ENCODE measurements at regions of chr6 and their contacts with region 1.

Region 1: DNA sequence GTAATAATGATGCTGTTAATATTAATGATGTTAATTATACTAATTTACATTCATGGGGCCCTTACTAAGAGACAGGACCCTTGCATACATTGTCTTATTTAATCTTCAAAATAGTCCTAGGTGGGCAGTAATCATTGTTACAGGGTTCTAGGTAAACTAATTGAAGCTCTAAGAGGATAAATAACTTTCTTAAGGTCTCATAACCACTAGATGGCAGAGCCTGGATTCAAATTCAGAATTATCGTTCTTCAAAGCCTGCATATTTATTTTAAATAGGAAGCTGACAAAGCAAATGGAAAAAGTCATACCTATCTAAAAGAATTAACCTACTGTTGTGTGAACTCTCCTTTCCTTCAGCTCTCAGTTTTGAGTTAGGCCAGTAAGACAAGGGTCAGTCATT is 23.5 kb downstream of the PTCHD4 start:
- DNase-seq: peak; percentile 68
- ATAC-seq: peak; percentile 48; the same call in 1 of the 2 replicates
- H3K4me3 ChIP-seq: no peak overlapping the region
- H3K27ac ChIP-seq: no peak overlapping the region
- H3K4me1 ChIP-seq: no peaks in the 10 kb centered on the region
- H3K27me3 ChIP-seq: no peaks in the 10 kb centered on the region
- CTCF ChIP-seq: peak; percentile 66

Region 2: GRCh38 chr6:47787620-47788497 is 299.6 kb before region 1 on chr6:
- CTCF ChIA-PET with region 1: no interaction called
- POLR2A ChIA-PET with region 1: no interaction called
- intact Hi-C with region 1: loop called (anchors 2 kb)
- DNase-seq: peak; percentile 88
- ATAC-seq: peak; percentile 95
- H3K4me3 ChIP-seq: peak overlapping the region; percentile 27
- H3K27ac ChIP-seq: no peak overlapping the region
- H3K4me1 ChIP-seq: peaks cover 16% of the 10 kb centered on the region
- H3K27me3 ChIP-seq: no peaks in the 10 kb centered on the region
- CTCF ChIP-seq: peak; percentile 96

Region 3: GRCh38 chr6:48449002-48449401 is 361.6 kb after region 1 on chr6:
- CTCF ChIA-PET with region 1: no interaction called
- POLR2A ChIA-PET with region 1: no interaction called
- intact Hi-C with region 1: loop called (anchors 1 kb)
- DNase-seq: peak; percentile 19
- ATAC-seq: no peak
- H3K4me3 ChIP-seq: no peak overlapping the region
- H3K27ac ChIP-seq: no peak overlapping the region
- H3K4me1 ChIP-seq: no peaks in the 10 kb centered on the region
- H3K27me3 ChIP-seq: no peaks in the 10 kb centered on the region
- CTCF ChIP-seq: peak; percentile 37

Region 4: GRCh38 chr6:48628316-48628715 is 540.9 kb after region 1 on chr6:
- CTCF ChIA-PET with region 1: no interaction called
- POLR2A ChIA-PET with region 1: no interaction called
- intact Hi-C with region 1: loop called (anchors 10 kb)
- DNase-seq: no peak
- ATAC-seq: no peak
- H3K4me3 ChIP-seq: no peak overlapping the region
- H3K27ac ChIP-seq: no peak overlapping the region
- H3K4me1 ChIP-seq: no peaks in the 10 kb centered on the region
- H3K27me3 ChIP-seq: no peaks in the 10 kb centered on the region
- CTCF ChIP-seq: no peak

Region 5: GRCh38 chr6:48916556-48916955 is 829.1 kb after region 1 on chr6:
- CTCF ChIA-PET with region 1: no interaction called
- POLR2A ChIA-PET with region 1: no interaction called
- intact Hi-C with region 1: loop called (anchors 5 kb)
- DNase-seq: peak; percentile 92
- ATAC-seq: peak; percentile 97
- H3K4me3 ChIP-seq: no peak overlapping the region
- H3K27ac ChIP-seq: peak overlapping the region; percentile 96
- H3K4me1 ChIP-seq: peaks cover 40% of the 10 kb centered on the region
- H3K27me3 ChIP-seq: no peaks in the 10 kb centered on the region
- CTCF ChIP-seq: no peak

Region 6: GRCh38 chr6:49423817-49424216 is 1336.4 kb after region 1 on chr6:
- CTCF ChIA-PET with region 1: no interaction called
- POLR2A ChIA-PET with region 1: no interaction called
- intact Hi-C with region 1: loop called (anchors 5 kb)
- DNase-seq: peak; percentile 55
- ATAC-seq: peak; percentile 55
- H3K4me3 ChIP-seq: no peak overlapping the region
- H3K27ac ChIP-seq: no peak overlapping the region
- H3K4me1 ChIP-seq: no peaks in the 10 kb centered on the region; the same call in 1 of the 2 replicates
- H3K27me3 ChIP-seq: no peaks in the 10 kb centered on the region
- CTCF ChIP-seq: peak; percentile 73

Measured in PC-3 (cell line).